Left ventricle myocardium superior (tissue), 1 donor: ENCODE measurements at regions of chr1 and their contacts with region 1.

Region 1: DNA sequence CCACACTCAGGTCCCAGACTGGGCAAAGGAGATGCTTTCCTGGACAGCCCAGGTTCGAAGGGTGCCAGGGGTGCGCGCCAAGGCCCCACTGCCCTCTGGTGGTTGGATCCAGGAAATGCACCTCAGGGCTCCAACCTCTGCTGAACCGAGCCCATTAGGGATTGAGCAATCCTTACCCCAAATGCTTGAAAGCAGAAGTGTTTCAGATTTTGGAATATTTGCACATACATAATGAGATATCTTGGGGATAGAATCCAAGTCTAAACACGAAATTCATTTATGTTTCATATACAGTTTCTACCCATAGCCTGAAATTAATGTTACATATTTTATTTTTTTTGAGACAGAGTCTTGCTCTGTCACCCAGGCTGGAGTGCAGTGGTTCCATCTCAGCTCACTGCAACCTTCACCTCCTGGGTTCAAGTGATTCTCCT is 57.4 kb downstream of the SLC9A1 start:
- DNase-seq: peak; percentile 79
- ATAC-seq: peak; percentile 62

Region 2: GRCh38 chr1:26999440-26999987 is 98.0 kb before region 1 on chr1:
- intact Hi-C with region 1: loop called (anchors 5 kb)
- DNase-seq: peak; percentile 72
- ATAC-seq: peak; percentile 79

Region 3: GRCh38 chr1:27044613-27045151 is 52.8 kb before region 1 on chr1:
- intact Hi-C with region 1: loop called (anchors 2 kb)
- DNase-seq: peak; percentile 94
- ATAC-seq: peak; percentile 94

Region 4: DNA sequence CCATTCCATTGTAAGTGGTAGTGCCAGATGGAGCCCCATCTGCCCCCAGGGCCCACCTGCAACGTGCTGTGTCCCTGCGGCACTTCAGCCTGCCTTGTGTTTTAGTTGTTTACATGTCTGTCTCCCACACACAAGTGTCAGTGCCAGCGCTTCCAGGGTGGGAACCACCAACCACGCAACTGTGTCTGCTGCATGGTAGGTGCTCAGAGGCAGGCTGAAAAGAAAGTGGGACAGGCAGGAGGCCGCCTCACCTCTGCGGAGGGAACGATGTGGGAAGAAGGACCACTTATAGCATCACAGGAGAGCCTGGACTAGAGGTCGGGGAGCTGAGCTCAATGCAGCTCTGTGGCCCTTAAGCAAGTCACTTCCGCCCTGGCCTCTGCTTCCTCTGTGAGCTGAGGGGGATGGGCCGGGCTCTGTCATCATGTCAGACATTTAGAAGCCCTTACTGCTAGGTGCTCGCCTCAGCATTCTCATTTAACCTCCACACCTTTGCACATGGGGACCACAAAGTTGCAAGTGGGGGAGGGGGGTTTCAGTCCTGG is 39.6 kb after region 1 on chr1:
- intact Hi-C with region 1: no loop called
- DNase-seq: peak; percentile 74
- ATAC-seq: peak; percentile 16